Vagina (tissue), 2 donors: ENCODE measurements at regions of chr2 and their contacts with region 1.

Region 1: GRCh38 chr2:168455648-168456520 is at the start of gene CERS6:
- DNase-seq: no peak
- H3K4me3 ChIP-seq: peak within 1 kb of the TSS; percentile 66 to 99
- H3K27ac ChIP-seq: peak within 1 kb of the TSS; percentile 89
- H3K4me1 ChIP-seq: peaks cover 32% of the 10 kb centered on the region
- H3K27me3 ChIP-seq: no peaks in the 10 kb centered on the region
- CTCF ChIP-seq: no peak
- POLR2A ChIP-seq: peak in 1 of 2 donors; percentile 76
- total RNA-seq, gene CERS6: 27.7 TPM

Region 2: GRCh38 chr2:168311261-168311910 is 144.5 kb before region 1 on chr2:
- intact Hi-C with region 1: no loop called
- DNase-seq: no peak
- H3K4me3 ChIP-seq: no peak overlapping the region
- H3K27ac ChIP-seq: no peak overlapping the region
- H3K4me1 ChIP-seq: peaks cover 15% of the 10 kb centered on the region
- H3K27me3 ChIP-seq: no peaks in the 10 kb centered on the region
- CTCF ChIP-seq: no peak
- POLR2A ChIP-seq: no peak

Region 3: GRCh38 chr2:168396131-168396530 is 59.8 kb before region 1 on chr2:
- intact Hi-C with region 1: no loop called
- DNase-seq: no peak
- H3K4me3 ChIP-seq: no peak overlapping the region
- H3K27ac ChIP-seq: no peak overlapping the region
- H3K4me1 ChIP-seq: no peaks in the 10 kb centered on the region
- H3K27me3 ChIP-seq: no peaks in the 10 kb centered on the region
- CTCF ChIP-seq: no peak
- POLR2A ChIP-seq: no peak

Region 4: GRCh38 chr2:168526641-168527040 is 70.8 kb after region 1 on chr2:
- intact Hi-C with region 1: loop called (anchors 5 kb)
- DNase-seq: peak in 1 of 2 donors; percentile 88
- H3K4me3 ChIP-seq: no peak overlapping the region
- H3K27ac ChIP-seq: peak overlapping the region; percentile 76
- H3K4me1 ChIP-seq: peaks cover 87% of the 10 kb centered on the region
- H3K27me3 ChIP-seq: no peaks in the 10 kb centered on the region
- CTCF ChIP-seq: no peak
- POLR2A ChIP-seq: no peak

Region 5: GRCh38 chr2:168626096-168626495 is 170.2 kb after region 1 on chr2:
- intact Hi-C with region 1: loop called (anchors 10 kb)
- DNase-seq: no peak
- H3K4me3 ChIP-seq: no peak overlapping the region
- H3K27ac ChIP-seq: no peak overlapping the region
- H3K4me1 ChIP-seq: no peaks in the 10 kb centered on the region
- H3K27me3 ChIP-seq: no peaks in the 10 kb centered on the region
- CTCF ChIP-seq: no peak
- POLR2A ChIP-seq: no peak